ENCODE measurements at regions of chr2 and their contacts with region 1.

Region 1: GRCh38 chr2:108533832-108534583 is at the start of gene LIMS1:
- DNase-seq: peak; percentile 94
- H3K4me3 ChIP-seq: peak within 1 kb of the TSS; percentile 77
- H3K27ac ChIP-seq: peak within 1 kb of the TSS; percentile 91
- H3K4me1 ChIP-seq: peaks cover 43% of the 10 kb centered on the region
- H3K27me3 ChIP-seq: no peaks in the 10 kb centered on the region
- CTCF ChIP-seq: peak; percentile 11
- total RNA-seq, gene LIMS1: 77.0 TPM

Region 2: GRCh38 chr2:107648781-107649404 is 885.1 kb before region 1 on chr2:
- intact Hi-C with region 1: no loop called
- DNase-seq: no peak
- H3K4me3 ChIP-seq: no peak overlapping the region
- H3K27ac ChIP-seq: no peak overlapping the region
- H3K4me1 ChIP-seq: no peaks in the 10 kb centered on the region
- H3K27me3 ChIP-seq: no peaks in the 10 kb centered on the region
- CTCF ChIP-seq: no peak

Region 3: DNA sequence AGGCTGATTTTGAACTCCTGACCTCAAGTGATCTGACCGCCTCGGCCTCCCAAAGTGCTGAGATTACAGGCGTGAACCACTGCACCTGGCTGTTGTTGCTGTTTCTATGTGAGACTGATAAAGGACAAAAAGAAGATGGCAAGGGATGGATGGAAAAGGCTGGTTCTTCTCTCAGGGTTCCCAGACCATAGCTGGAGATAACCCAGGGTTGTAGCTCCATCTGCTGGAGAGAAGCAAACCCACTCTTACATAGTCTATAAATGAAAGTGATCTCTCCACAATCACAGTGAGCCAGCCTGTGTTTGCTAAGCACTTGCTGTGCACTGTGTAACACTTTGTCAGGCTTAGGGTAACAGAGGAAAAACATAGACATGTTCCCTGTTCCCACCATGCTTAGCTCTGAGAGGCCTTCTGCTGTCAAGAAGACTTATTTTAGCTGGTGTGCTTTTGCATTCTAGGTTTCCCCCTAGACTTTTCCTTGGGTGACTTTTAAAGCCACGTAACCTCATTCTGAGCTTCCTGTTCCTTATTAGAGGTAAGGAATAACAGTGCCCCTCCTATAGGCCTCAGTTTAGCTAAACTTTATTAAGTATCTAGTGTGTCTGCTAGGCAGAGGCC is 50.0 kb after region 1 on chr2:
- intact Hi-C with region 1: loop called (anchors 10 kb)
- DNase-seq: no peak
- H3K4me3 ChIP-seq: no peak overlapping the region
- H3K27ac ChIP-seq: no peak overlapping the region
- H3K4me1 ChIP-seq: peaks cover 58% of the 10 kb centered on the region
- H3K27me3 ChIP-seq: no peaks in the 10 kb centered on the region
- CTCF ChIP-seq: peak; percentile 88